GM12878 (cell line): ENCODE measurements at regions of chr16 and their contacts with region 1.

Region 1: DNA sequence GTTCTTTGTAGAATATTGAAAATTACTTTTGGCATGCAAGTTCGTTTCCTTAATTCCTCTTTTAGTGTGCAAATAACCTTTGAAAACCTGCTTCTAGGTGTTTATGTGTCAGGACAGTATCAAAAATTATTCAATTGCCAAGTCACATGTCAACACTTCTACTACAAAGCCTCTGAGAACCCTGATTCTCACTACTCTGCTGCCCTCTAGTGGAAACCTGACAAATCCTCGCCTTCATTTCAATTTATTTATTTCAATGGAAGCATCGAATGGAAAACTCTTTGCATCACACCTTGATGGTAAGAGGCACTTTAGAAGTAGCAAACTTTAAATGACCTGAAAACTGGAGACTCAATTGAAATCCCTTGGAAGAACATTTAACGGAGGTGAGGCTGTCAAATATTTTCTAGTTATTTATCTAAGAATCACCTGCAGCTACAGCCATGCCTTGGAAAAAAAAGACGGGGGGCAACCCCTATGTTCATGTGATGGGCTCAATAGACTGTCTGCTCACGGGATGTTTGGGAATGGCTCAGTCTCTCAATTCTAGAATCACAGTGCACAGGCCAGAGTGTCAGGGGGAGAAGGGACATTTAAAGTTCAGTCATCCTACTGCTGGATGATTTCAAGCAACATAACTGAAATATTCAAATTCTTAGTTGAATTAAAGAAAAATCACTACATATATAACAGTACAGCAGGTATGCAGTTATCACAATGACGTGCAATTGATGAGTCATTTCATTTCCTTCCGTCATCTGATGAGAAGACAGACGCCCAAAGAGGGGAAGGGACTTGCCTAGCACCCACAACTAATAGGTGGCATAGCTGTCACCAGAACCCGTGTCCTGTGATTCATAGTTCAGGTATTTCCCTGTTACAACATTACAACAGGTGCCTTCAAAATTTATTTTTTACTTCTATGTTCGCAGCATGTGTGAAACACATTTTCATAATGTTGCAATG is 563.9 kb downstream of the TOX3 start:
- DNase-seq: no peak
- ATAC-seq: peak; percentile 72
- H3K4me3 ChIP-seq: no peak overlapping the region
- H3K27ac ChIP-seq: no peak overlapping the region
- H3K4me1 ChIP-seq: no peaks in the 10 kb centered on the region
- H3K27me3 ChIP-seq: no peaks in the 10 kb centered on the region
- CTCF ChIP-seq: peak; percentile 63 to 78 (median 63)
- EP300 ChIP-seq: no peak
- POLR2A ChIP-seq: no peak
- RAD21 ChIP-seq: peak; percentile 71

Region 2: DNA sequence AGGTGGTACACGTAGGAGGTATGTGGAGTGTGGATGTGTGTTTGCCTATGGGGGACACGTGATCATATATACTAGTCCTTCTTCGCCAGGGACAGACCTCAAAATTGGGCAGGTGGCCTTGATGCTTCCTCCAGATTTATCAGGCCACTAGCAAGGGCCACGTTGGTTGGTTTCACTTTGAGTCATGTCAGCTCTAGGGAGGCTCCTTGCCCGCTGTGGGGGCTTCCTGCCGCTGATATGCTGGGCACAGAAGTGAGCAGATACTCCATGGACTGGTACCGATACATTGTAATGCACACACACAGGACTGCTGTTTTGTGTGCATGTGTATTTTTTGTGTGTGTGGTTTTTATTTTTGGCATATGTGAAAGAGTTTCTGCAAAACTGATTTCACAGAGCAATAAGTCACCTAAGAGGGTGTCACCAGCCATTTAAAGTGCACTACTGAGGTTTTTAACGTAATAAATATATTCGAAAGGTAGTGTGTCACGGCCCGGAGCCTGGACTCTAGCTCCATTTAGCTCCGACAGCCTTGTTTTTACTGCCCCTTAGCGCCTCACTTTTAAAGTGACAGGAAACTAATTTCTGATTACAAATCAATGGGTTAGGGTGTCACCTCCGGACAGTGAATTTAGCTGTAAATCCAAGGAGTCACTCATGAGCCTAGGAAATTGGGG is 226.4 kb before region 1 on chr16:
- CTCF ChIA-PET with region 1: no interaction called
- POLR2A ChIA-PET with region 1: no interaction called
- RAD21 ChIA-PET with region 1: no interaction called
- SMC1A ChIA-PET with region 1: no interaction called
- in situ Hi-C with region 1: no loop called
- intact Hi-C with region 1: no loop called
- DNase-seq: no peak
- ATAC-seq: peak; percentile 65
- H3K4me3 ChIP-seq: no peak overlapping the region
- H3K27ac ChIP-seq: no peak overlapping the region
- H3K4me1 ChIP-seq: no peaks in the 10 kb centered on the region
- H3K27me3 ChIP-seq: no peaks in the 10 kb centered on the region
- CTCF ChIP-seq: no peak
- EP300 ChIP-seq: no peak
- POLR2A ChIP-seq: no peak
- RAD21 ChIP-seq: no peak

Region 3: GRCh38 chr16:51818342-51818944 is 164.6 kb before region 1 on chr16:
- CTCF ChIA-PET with region 1: interaction called, 37 read pairs
- POLR2A ChIA-PET with region 1: no interaction called
- RAD21 ChIA-PET with region 1: interaction called, 3 read pairs
- SMC1A ChIA-PET with region 1: interaction called, 6 read pairs
- in situ Hi-C with region 1: loop called (anchors 5 kb)
- intact Hi-C with region 1: loop called (anchors 1 kb)
- DNase-seq: no peak
- ATAC-seq: peak; percentile 52
- H3K4me3 ChIP-seq: no peak overlapping the region
- H3K27ac ChIP-seq: no peak overlapping the region
- H3K4me1 ChIP-seq: no peaks in the 10 kb centered on the region
- H3K27me3 ChIP-seq: no peaks in the 10 kb centered on the region
- CTCF ChIP-seq: peak; percentile 34 to 58 (median 48)
- EP300 ChIP-seq: no peak
- POLR2A ChIP-seq: no peak
- RAD21 ChIP-seq: peak; percentile 26; the same call in 1 of the 2 replicates

Region 4: DNA sequence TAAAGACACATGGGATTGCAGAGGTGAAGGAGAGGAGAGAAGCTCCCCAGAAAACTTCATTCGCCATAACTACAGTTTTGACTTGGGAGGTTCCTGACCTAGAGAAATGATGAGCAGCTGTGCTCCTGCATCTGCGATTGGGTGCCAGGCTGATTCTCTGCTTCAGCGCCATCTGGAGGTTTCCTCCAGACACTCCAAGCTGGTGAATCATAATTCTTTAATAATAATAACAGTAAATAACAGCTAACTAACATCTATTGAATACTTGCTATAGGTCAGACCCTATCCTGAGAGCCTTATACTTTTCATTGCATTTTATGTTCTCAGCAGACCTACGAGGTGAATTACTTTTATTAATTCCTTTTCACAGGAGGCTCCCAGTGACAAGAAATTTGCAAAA is 11.8 kb before region 1 on chr16:
- CTCF ChIA-PET with region 1: interaction called, 13 read pairs
- POLR2A ChIA-PET with region 1: no interaction called
- RAD21 ChIA-PET with region 1: interaction called, 3 read pairs
- SMC1A ChIA-PET with region 1: no interaction called
- in situ Hi-C with region 1: no loop called
- intact Hi-C with region 1: no loop called
- DNase-seq: no peak
- ATAC-seq: no peak
- H3K4me3 ChIP-seq: no peak overlapping the region
- H3K27ac ChIP-seq: no peak overlapping the region
- H3K4me1 ChIP-seq: no peaks in the 10 kb centered on the region
- H3K27me3 ChIP-seq: no peaks in the 10 kb centered on the region
- CTCF ChIP-seq: peak in 1 of 3 experiments; percentile 11; a peak in 1 of 6 replicates
- EP300 ChIP-seq: no peak
- POLR2A ChIP-seq: no peak
- RAD21 ChIP-seq: no peak

Region 5: GRCh38 chr16:52095471-52095870 is 112.5 kb after region 1 on chr16:
- CTCF ChIA-PET with region 1: no interaction called
- POLR2A ChIA-PET with region 1: no interaction called
- RAD21 ChIA-PET with region 1: no interaction called
- SMC1A ChIA-PET with region 1: no interaction called
- in situ Hi-C with region 1: no loop called
- intact Hi-C with region 1: no loop called
- DNase-seq: no peak
- ATAC-seq: no peak
- H3K4me3 ChIP-seq: no peak overlapping the region
- H3K27ac ChIP-seq: no peak overlapping the region
- H3K4me1 ChIP-seq: no peaks in the 10 kb centered on the region
- H3K27me3 ChIP-seq: no peaks in the 10 kb centered on the region
- CTCF ChIP-seq: no peak
- EP300 ChIP-seq: no peak
- POLR2A ChIP-seq: no peak
- RAD21 ChIP-seq: no peak